Lower leg skin (tissue), 4 donors: ENCODE measurements at regions of chrX and their contacts with region 1.

Region 1: GRCh38 chrX:3119376-3119775 is 78.1 kb downstream of the ARSF start:
- DNase-seq: no peak
- H3K4me3 ChIP-seq: no peak overlapping the region
- CTCF ChIP-seq: no peak
- POLR2A ChIP-seq: no peak

Region 2: GRCh38 chrX:3340016-3340415 is 220.6 kb after region 1 on chrX:
- intact Hi-C with region 1: no loop called
- DNase-seq: no peak
- H3K4me3 ChIP-seq: no peak overlapping the region
- CTCF ChIP-seq: no peak
- POLR2A ChIP-seq: no peak

Region 3: GRCh38 chrX:3532581-3532980 is 413.2 kb after region 1 on chrX:
- intact Hi-C with region 1: loop called (anchors 10 kb)
- DNase-seq: no peak
- H3K4me3 ChIP-seq: no peak overlapping the region
- CTCF ChIP-seq: no peak
- POLR2A ChIP-seq: no peak

Region 4: DNA sequence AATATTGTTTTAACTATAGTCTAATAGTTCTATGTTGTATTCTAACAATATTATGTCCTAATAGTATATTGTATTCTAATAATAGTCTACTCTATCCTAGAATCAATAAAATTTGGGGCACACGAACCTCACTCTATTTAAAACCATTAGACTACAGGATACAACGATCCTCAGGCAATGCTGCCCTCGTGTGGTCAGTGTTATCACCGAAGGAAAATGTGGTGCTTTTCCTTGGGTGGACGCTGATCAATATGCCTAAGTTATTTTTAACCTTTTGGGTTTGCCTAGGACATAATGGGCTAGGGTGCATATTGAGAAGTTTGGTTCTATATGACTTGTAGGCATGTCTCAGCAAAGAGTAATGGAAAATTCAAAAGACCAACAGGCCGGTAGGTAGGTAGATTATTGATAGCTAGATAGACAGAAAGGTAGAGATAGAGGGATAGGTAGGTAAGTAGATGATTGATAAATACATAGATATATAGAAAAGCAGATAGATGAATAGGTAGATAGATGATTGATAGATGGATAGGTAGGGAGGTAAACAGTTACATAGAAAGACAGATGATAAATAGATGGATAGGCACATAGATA is 519.0 kb after region 1 on chrX:
- intact Hi-C with region 1: loop called (anchors 10 kb)
- DNase-seq: peak in 1 of 2 donors; percentile 81
- H3K4me3 ChIP-seq: no peak overlapping the region
- CTCF ChIP-seq: no peak
- POLR2A ChIP-seq: no peak